CD4-positive, alpha-beta memory T cell (primary cell): ENCODE measurements at regions of chr9 and their contacts with region 1.

Region 1: GRCh38 chr9:92860867-92861266 is 17.0 kb downstream of the ZNF484 start:
- DNase-seq: no peak
- H3K4me3 ChIP-seq: no peak overlapping the region
- H3K4me3 Mint-ChIP-seq: no peak overlapping the region
- H3K27ac ChIP-seq: no peak overlapping the region
- H3K27ac Mint-ChIP-seq: no peak overlapping the region
- H3K4me1 ChIP-seq: peaks cover 3% of the 10 kb centered on the region
- H3K4me1 Mint-ChIP-seq: peaks cover 26 to 50% (median 43%) of the 10 kb centered on the region in 4 donors
- H3K27me3 ChIP-seq: no peaks in the 10 kb centered on the region
- H3K27me3 Mint-ChIP-seq: no peaks in the 10 kb centered on the region

Region 2: GRCh38 chr9:92820964-92821363 is 39.9 kb before region 1 on chr9:
- CTCF ChIA-PET with region 1: no interaction called
- POLR2A ChIA-PET with region 1: no interaction called
- intact Hi-C with region 1: loop called (anchors 5 kb)
- DNase-seq: no peak
- H3K4me3 ChIP-seq: no peak overlapping the region
- H3K4me3 Mint-ChIP-seq: no peak overlapping the region
- H3K27ac ChIP-seq: no peak overlapping the region
- H3K27ac Mint-ChIP-seq: no peak overlapping the region
- H3K4me1 ChIP-seq: no peaks in the 10 kb centered on the region
- H3K4me1 Mint-ChIP-seq: no peaks in the 10 kb centered on the region
- H3K27me3 ChIP-seq: no peaks in the 10 kb centered on the region
- H3K27me3 Mint-ChIP-seq: peaks cover 22 to 28% of the 10 kb centered on the region in 2 donors

Region 3: DNA sequence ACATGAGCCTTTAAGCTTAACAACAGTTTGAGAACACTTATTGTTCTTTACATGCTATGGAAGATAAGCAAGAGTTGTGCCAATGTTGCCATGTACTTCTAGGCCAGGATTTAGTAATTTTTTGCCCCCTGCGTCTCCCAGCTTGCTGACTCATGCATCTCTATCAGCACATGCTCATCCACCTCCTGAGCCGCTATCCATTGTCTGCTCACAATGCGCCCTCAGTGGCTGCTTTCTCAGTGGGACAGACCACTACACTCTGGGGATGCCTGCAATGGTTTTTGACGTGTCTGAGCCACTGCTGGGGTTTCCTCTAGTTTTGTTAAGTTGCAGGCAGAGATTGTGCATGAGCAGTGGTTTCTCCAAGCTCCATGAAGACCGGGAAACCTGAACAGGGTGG is 664.6 kb after region 1 on chr9:
- CTCF ChIA-PET with region 1: no interaction called
- POLR2A ChIA-PET with region 1: no interaction called
- intact Hi-C with region 1: loop called (anchors 5 kb)
- DNase-seq: no peak
- H3K4me3 ChIP-seq: no peak overlapping the region
- H3K4me3 Mint-ChIP-seq: no peak overlapping the region
- H3K27ac ChIP-seq: no peak overlapping the region
- H3K27ac Mint-ChIP-seq: peak overlapping the region in 1 of 7 donors; percentile 18
- H3K4me1 ChIP-seq: no peaks in the 10 kb centered on the region
- H3K4me1 Mint-ChIP-seq: peaks cover 15 to 21% (median 16%) of the 10 kb centered on the region in 4 donors
- H3K27me3 ChIP-seq: no peaks in the 10 kb centered on the region
- H3K27me3 Mint-ChIP-seq: no peaks in the 10 kb centered on the region